ENCODE measurements at regions of chr1 and their contacts with region 1.

Region 1: DNA sequence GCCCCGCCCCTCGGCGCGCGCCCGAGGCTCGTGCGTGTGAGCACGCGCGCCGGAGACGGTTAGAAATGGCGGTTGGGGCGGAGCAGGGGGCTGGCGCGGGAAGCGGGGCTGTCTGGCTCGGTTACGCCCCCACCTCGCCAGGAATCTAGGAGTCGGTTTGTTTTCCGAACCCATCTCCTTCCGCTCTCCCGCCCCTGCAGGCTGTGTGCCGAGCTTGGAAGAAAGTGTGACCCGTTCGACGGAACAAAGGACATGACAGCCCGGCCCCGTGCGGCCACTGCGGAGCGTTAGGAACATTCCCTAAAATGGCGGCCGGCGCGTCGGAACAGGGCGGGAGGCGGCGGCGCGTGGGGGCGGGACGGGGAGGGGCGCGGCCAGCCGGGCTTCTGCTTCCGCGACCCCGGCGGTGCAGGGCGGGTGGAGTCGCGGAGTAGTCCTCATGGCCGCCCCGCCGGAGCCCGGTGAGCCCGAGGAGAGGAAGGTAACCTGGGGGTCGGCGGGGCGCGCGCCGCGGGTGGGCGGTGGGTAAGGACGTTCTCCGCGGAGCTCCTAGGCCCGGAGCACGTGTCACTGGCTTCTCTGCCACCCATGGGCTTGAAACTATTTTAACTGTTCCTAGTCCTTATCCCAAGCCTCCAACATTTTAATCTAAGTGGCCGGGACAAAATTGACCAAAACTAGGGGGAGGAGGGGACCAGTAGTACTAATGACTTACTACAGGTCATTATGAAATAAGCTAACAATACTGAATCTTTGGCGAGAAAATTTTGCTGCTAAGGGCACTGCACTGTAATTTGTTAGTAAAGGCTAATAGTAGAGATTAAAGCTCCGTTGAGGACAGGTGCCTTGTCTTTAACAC is at the start of gene COX20:
- DNase-seq: peak; percentile 87
- H3K4me3 Mint-ChIP-seq: peak within 1 kb of the TSS; percentile 84
- H3K27ac Mint-ChIP-seq: peak within 1 kb of the TSS; percentile 100
- H3K4me1 Mint-ChIP-seq: peaks cover 50% of the 10 kb centered on the region
- H3K27me3 Mint-ChIP-seq: no peaks in the 10 kb centered on the region
- total RNA-seq, gene COX20: 29.8 to 32.9 TPM

Region 2: DNA sequence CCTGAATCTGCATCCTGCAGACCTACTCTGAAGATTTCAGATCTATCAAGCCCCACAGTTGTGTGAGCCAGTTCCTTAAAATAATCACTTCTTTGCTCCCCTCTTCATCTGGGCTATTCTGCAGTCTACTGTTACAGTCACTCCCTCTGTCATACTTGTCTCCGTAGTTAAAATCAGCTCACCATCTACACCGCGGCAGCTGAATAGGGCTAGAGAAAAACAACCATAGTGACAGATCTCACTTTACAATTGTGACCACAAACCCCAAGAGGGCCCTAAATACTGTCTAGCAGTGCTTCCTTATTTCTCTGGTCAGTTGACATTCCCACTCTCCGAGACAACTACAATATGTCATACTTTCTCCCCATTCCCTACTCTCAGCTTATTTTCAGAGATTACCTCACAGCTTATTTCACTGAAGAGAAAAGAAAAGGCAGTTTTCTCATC is 169.7 kb before region 1 on chr1:
- CTCF ChIA-PET with region 1: no interaction called
- POLR2A ChIA-PET with region 1: no interaction called
- DNase-seq: no peak
- H3K4me3 Mint-ChIP-seq: no peak overlapping the region
- H3K27ac Mint-ChIP-seq: no peak overlapping the region
- H3K4me1 Mint-ChIP-seq: peaks cover 1% of the 10 kb centered on the region
- H3K27me3 Mint-ChIP-seq: no peaks in the 10 kb centered on the region

Region 3: GRCh38 chr1:244846653-244847052 is 11.1 kb after region 1 on chr1:
- CTCF ChIA-PET with region 1: interaction called, 27 read pairs
- POLR2A ChIA-PET with region 1: interaction called, 4 read pairs
- DNase-seq: no peak
- H3K4me3 Mint-ChIP-seq: no peak overlapping the region
- H3K27ac Mint-ChIP-seq: peak overlapping the region; percentile 15
- H3K4me1 Mint-ChIP-seq: peaks cover 59% of the 10 kb centered on the region
- H3K27me3 Mint-ChIP-seq: no peaks in the 10 kb centered on the region

Region 4: GRCh38 chr1:244864253-244865027 is 28.9 kb after region 1 on chr1 and contains the start of gene HNRNPU:
- CTCF ChIA-PET with region 1: interaction called, 76 read pairs
- POLR2A ChIA-PET with region 1: interaction called, 9 read pairs
- DNase-seq: peak; percentile 94
- H3K4me3 Mint-ChIP-seq: peak within 1 kb of the TSS; percentile 84
- H3K27ac Mint-ChIP-seq: peak within 1 kb of the TSS; percentile 98
- H3K4me1 Mint-ChIP-seq: peaks cover 41% of the 10 kb centered on the region
- H3K27me3 Mint-ChIP-seq: no peaks in the 10 kb centered on the region
- total RNA-seq, gene HNRNPU: 425 to 469 TPM